Pancreas (tissue), 10 donors: ENCODE measurements at regions of chr12 and their contacts with region 1.

Region 1: DNA sequence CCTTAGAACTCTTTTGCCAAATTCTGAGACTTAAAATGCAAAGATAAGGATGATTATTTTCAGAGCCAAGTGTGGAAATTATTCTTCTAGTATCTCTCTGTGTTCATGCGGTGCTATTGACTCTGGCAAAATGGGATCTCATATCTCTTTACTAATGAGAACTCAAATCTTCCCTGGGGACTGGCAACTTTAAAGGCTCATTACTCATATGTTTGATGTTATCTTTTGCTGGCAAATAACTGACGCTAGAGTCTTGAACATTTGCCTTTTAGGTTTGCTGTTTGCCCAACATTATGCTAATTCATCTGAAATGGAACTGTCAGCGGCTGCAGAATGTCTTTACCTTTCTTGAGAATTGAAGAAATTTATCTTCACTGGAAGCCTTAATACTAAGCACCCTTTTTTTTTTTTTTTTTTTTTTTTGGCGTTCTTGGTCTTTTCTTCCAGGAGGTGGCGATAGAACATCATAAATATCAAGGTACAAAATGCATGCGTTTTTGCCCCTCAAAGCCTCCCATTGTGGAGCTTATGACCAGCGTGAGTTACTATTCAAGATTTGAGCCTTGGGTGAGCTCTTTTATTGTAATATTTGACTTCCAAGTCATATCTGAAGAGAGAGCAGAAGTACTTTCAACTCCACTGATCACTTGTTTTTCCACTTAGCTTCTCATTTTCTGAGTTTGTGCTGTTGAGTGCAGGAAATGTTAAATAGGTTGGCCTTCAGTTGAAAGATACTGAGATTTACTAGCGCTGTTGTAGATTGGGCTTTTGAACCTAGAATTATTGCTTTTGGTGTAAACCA is 86.6 kb downstream of the CAND1 start:
- DNase-seq: peak in 1 of 6 donors; percentile 20
- ATAC-seq: peak; percentile 82 to 88 (median 86)
- H3K4me3 ChIP-seq: no peak overlapping the region
- H3K27ac ChIP-seq: peak overlapping the region in 3 of 4 donors; percentile 25 to 66 (median 51)
- H3K4me1 ChIP-seq: peaks cover 0 to 4% (median 4%) of the 10 kb centered on the region in 3 donors
- H3K27me3 ChIP-seq: no peaks in the 10 kb centered on the region
- CTCF ChIP-seq: peak in 3 of 4 donors; percentile 20 to 36 (median 26)

Region 2: DNA sequence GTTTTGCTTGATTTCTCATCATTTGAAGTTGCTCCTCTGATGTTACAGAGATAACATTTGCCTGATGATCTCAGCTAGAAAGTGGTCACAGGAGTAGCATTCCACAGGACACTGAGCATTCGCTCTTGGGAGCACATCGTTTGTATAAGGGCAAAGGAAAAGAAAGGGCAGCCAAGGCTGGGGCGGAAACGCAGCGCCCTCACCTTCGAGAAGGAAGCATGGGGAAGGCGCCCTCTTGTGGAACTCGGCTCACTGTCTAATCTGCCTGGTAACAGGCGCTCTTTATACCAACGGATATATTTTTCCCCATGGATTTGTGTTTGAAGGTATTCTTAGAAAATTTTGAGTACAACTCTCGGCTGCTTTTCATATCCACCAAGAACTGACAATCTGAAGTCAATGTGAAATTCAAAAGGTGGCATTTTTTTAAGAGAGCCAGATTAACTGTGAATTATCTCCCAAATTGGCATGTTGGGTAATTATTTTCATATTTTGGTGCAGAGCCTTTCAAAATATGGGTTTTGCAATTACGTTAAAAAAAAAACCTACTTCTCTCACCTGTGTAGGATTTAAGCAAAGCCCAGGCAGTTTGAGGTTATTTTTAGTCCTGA is 86.1 kb after region 1 on chr12:
- intact Hi-C with region 1: loop called in 1 of 3 experiments (anchors 10 kb)
- DNase-seq: peak; percentile 80 to 94 (median 90)
- ATAC-seq: peak; percentile 98 to 99 (median 98)
- H3K4me3 ChIP-seq: peak overlapping the region in 2 of 4 donors; percentile 12 to 23
- H3K27ac ChIP-seq: peak overlapping the region in 1 of 4 donors; percentile 5
- H3K4me1 ChIP-seq: peaks cover 4 to 7% (median 6%) of the 10 kb centered on the region in 3 donors
- H3K27me3 ChIP-seq: no peaks in the 10 kb centered on the region
- CTCF ChIP-seq: peak; percentile 63 to 71 (median 69)

Region 3: GRCh38 chr12:67943226-67943892 is 587.6 kb after region 1 on chr12:
- intact Hi-C with region 1: loop called in 2 of 3 experiments (anchors 5 to 10 kb)
- DNase-seq: peak in 4 of 6 donors; percentile 24 to 73 (median 47)
- ATAC-seq: peak; percentile 68 to 97 (median 95)
- H3K4me3 ChIP-seq: no peak overlapping the region
- H3K27ac ChIP-seq: no peak overlapping the region
- H3K4me1 ChIP-seq: peaks cover 4 to 9% (median 5%) of the 10 kb centered on the region in 3 donors
- H3K27me3 ChIP-seq: no peaks in the 10 kb centered on the region
- CTCF ChIP-seq: peak; percentile 46 to 67 (median 56)